B cell (primary cell): ENCODE measurements at regions of chr1 and their contacts with region 1.

Region 1: DNA sequence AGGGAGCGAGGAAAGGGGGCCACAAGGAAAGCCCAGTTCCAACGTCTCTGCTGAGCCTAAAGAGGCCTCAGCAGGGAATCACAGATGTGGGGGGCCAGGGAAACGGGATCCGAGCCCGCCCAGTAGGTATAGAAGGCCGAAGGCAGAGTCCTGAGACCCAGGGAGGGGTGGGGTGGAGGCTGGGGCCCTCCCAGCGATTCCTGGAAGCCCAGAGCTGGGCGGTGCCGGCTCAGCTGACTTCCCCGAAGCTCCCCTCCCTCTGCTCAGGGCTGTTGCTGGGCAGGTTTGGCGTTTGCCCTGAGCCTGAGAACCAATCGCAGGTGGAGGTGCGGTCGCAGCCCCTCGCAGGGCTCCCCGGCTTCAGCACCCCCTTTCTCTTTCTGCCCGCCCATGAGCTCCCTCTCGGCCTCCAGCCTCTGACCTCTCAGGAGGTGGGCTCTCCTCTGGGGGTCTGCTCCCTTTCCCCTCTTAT is 12.8 kb downstream of the ADAMTSL4 start:
- DNase-seq: peak; percentile 90
- ATAC-seq: peak; percentile 37
- H3K4me3 ChIP-seq: peak overlapping the region; percentile 63 to 89 (median 80)
- H3K4me3 Mint-ChIP-seq: peak overlapping the region; percentile 99
- H3K27ac ChIP-seq: peak overlapping the region; percentile 96 to 99
- H3K27ac Mint-ChIP-seq: peak overlapping the region; percentile 98
- H3K4me1 ChIP-seq: peaks cover 55 to 68% of the 10 kb centered on the region in 2 donors
- H3K4me1 Mint-ChIP-seq: peaks cover 59% of the 10 kb centered on the region
- H3K27me3 ChIP-seq: no peaks in the 10 kb centered on the region
- H3K27me3 Mint-ChIP-seq: no peaks in the 10 kb centered on the region
- CTCF ChIP-seq: no peak

Region 2: GRCh38 chr1:150515328-150516048 is 46.5 kb before region 1 on chr1 and contains the start of gene FALEC:
- CTCF ChIA-PET with region 1: interaction called, 11 read pairs
- POLR2A ChIA-PET with region 1: no interaction called
- intact Hi-C with region 1: loop called (anchors 1 kb)
- DNase-seq: peak; percentile 94
- ATAC-seq: peak; percentile 99
- H3K4me3 ChIP-seq: peak within 1 kb of the TSS; percentile 50 to 86 (median 80)
- H3K4me3 Mint-ChIP-seq: peak within 1 kb of the TSS; percentile 90
- H3K27ac ChIP-seq: peak within 1 kb of the TSS; percentile 59 to 78
- H3K27ac Mint-ChIP-seq: peak within 1 kb of the TSS; percentile 83
- H3K4me1 ChIP-seq: peaks cover 22 to 26% of the 10 kb centered on the region in 2 donors
- H3K4me1 Mint-ChIP-seq: peaks cover 25% of the 10 kb centered on the region
- H3K27me3 ChIP-seq: no peaks in the 10 kb centered on the region
- H3K27me3 Mint-ChIP-seq: no peaks in the 10 kb centered on the region
- CTCF ChIP-seq: no peak
- total RNA-seq, gene FALEC: 2.0 and 2.6 TPM in 2 replicates

Region 3: GRCh38 chr1:150578965-150579798 is 17.2 kb after region 1 on chr1 and contains the start of gene MCL1:
- CTCF ChIA-PET with region 1: interaction called, 497 read pairs
- POLR2A ChIA-PET with region 1: interaction called, 371 read pairs
- intact Hi-C with region 1: loop called (anchors 1 kb)
- DNase-seq: peak; percentile 94
- ATAC-seq: peak; percentile 80
- H3K4me3 ChIP-seq: peak within 1 kb of the TSS; percentile 76 to 100 (median 98)
- H3K4me3 Mint-ChIP-seq: peak within 1 kb of the TSS; percentile 99
- H3K27ac ChIP-seq: peak within 1 kb of the TSS; percentile 86 to 97
- H3K27ac Mint-ChIP-seq: peak within 1 kb of the TSS; percentile 97
- H3K4me1 ChIP-seq: peaks cover 29 to 39% of the 10 kb centered on the region in 2 donors
- H3K4me1 Mint-ChIP-seq: peaks cover 51% of the 10 kb centered on the region
- H3K27me3 ChIP-seq: no peaks in the 10 kb centered on the region
- H3K27me3 Mint-ChIP-seq: no peaks in the 10 kb centered on the region
- CTCF ChIP-seq: no peak
- total RNA-seq, gene MCL1: 214 and 219 TPM in 2 replicates

Region 4: DNA sequence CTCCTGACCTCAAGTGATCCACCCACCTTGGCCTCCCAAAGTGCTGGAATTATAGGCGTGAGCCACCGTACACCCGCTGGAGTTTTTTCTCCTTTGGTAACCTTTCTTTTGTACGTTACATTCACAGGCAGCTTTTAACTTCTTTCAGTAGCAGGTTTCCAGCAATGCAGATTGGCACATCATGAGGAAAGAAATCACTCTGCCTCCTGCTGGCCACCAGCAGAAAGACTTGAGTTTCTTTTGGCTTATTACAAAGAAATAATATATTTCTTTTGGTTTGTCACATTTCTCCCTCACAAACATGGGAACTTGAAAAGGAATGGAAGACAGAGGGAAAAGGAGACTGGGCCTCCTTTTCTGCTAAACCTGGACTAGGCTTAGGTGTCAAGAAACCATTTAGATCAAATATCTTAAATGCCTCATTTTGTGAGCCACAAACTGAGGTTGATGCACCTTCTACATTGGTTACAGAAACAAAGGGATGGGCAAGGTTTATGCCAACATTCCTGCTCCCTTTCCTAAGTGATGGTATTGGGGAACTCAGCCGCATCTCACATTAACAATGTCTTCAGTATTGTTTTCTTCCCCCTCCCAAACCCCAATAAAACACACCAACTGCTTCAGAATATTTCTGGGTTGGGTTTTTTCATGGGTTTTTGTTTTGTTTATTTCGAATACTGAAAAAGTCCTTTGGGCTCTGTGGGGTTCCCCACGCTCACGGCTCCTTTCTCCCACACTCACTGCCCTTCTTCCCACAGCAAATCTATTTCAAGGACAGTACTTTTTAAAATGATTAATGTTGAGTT is 59.7 kb after region 1 on chr1:
- CTCF ChIA-PET with region 1: interaction called, 661 read pairs
- POLR2A ChIA-PET with region 1: interaction called, 21 read pairs
- intact Hi-C with region 1: loop called (anchors 1 kb)
- DNase-seq: peak; percentile 77
- ATAC-seq: peak; percentile 63
- H3K4me3 ChIP-seq: no peak overlapping the region
- H3K4me3 Mint-ChIP-seq: no peak overlapping the region
- H3K27ac ChIP-seq: peak overlapping the region; percentile 31 to 74
- H3K27ac Mint-ChIP-seq: peak overlapping the region; percentile 80
- H3K4me1 ChIP-seq: peaks cover 24 to 31% of the 10 kb centered on the region in 2 donors
- H3K4me1 Mint-ChIP-seq: peaks cover 30% of the 10 kb centered on the region
- H3K27me3 ChIP-seq: no peaks in the 10 kb centered on the region
- H3K27me3 Mint-ChIP-seq: no peaks in the 10 kb centered on the region
- CTCF ChIP-seq: peak; percentile 87

Region 5: GRCh38 chr1:150765296-150765976 is 203.4 kb after region 1 on chr1 and contains the start of gene CTSS:
- CTCF ChIA-PET with region 1: no interaction called
- POLR2A ChIA-PET with region 1: no interaction called
- intact Hi-C with region 1: loop called (anchors 5 kb)
- DNase-seq: peak; percentile 86
- ATAC-seq: peak; percentile 87
- H3K4me3 ChIP-seq: peak within 1 kb of the TSS; percentile 62 to 99 (median 80)
- H3K4me3 Mint-ChIP-seq: peak within 1 kb of the TSS; percentile 96
- H3K27ac ChIP-seq: peak within 1 kb of the TSS; percentile 85 to 97
- H3K27ac Mint-ChIP-seq: peak within 1 kb of the TSS; percentile 97
- H3K4me1 ChIP-seq: peaks cover 36 to 40% of the 10 kb centered on the region in 2 donors
- H3K4me1 Mint-ChIP-seq: peaks cover 45% of the 10 kb centered on the region
- H3K27me3 ChIP-seq: no peaks in the 10 kb centered on the region
- H3K27me3 Mint-ChIP-seq: no peaks in the 10 kb centered on the region
- CTCF ChIP-seq: no peak
- total RNA-seq, gene CTSS: 221 and 241 TPM in 2 replicates

Region 6: GRCh38 chr1:151008190-151008860 is 446.3 kb after region 1 on chr1 and contains the start of gene PRUNE1:
- CTCF ChIA-PET with region 1: interaction called, 3 read pairs
- POLR2A ChIA-PET with region 1: no interaction called
- intact Hi-C with region 1: loop called (anchors 5 kb)
- DNase-seq: peak; percentile 98
- ATAC-seq: peak; percentile 97
- H3K4me3 ChIP-seq: peak within 1 kb of the TSS; percentile 74 to 98 (median 85)
- H3K4me3 Mint-ChIP-seq: peak within 1 kb of the TSS; percentile 90
- H3K27ac ChIP-seq: peak within 1 kb of the TSS; percentile 82 to 95
- H3K27ac Mint-ChIP-seq: peak within 1 kb of the TSS; percentile 94
- H3K4me1 ChIP-seq: peaks cover 39 to 55% of the 10 kb centered on the region in 2 donors
- H3K4me1 Mint-ChIP-seq: peaks cover 66% of the 10 kb centered on the region
- H3K27me3 ChIP-seq: no peaks in the 10 kb centered on the region
- H3K27me3 Mint-ChIP-seq: no peaks in the 10 kb centered on the region
- CTCF ChIP-seq: no peak
- total RNA-seq, gene PRUNE1: 20.8 and 21.3 TPM in 2 replicates